ENCODE measurements at regions of chr2 and their contacts with region 1.

Region 1: DNA sequence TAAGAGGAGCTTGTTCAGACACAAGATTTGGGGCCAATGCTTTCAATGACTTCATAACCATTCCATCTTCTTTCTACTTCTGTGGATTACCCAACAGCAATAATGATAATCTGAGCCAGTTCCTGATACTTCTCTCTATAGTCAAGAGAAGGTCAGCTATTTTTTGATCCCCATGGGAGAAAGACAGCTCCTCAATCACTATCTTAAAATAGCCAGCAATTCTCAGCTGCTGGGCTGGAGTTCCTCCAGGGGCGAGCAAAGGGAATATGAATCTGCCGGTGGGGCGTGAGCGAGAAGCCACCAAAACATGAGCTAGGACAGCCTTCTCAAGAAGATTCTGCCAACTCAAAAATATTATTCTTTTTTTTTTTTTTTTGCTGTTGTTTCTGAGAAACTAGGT is at the start of gene TMEM182:
- DNase-seq: peak; percentile 73
- ATAC-seq: peak; percentile 90
- total RNA-seq, gene TMEM182: 175 TPM

Region 2: GRCh38 chr2:102460467-102460866 is 301.3 kb before region 1 on chr2:
- intact Hi-C with region 1: no loop called
- DNase-seq: no peak
- ATAC-seq: no peak

Region 3: GRCh38 chr2:102788885-102789260 is 27.1 kb after region 1 on chr2:
- intact Hi-C with region 1: loop called (anchors 2 kb)
- DNase-seq: peak; percentile 77
- ATAC-seq: peak; percentile 96

Region 4: GRCh38 chr2:102806250-102806837 is 44.6 kb after region 1 on chr2:
- intact Hi-C with region 1: loop called (anchors 2 kb)
- DNase-seq: no peak
- ATAC-seq: peak; percentile 69

Measured in Right ventricle myocardium inferior (tissue), 1 donor.